Posterior vena cava (tissue), 2 donors: ENCODE measurements at regions of chr13 and their contacts with region 1.

Region 1: DNA sequence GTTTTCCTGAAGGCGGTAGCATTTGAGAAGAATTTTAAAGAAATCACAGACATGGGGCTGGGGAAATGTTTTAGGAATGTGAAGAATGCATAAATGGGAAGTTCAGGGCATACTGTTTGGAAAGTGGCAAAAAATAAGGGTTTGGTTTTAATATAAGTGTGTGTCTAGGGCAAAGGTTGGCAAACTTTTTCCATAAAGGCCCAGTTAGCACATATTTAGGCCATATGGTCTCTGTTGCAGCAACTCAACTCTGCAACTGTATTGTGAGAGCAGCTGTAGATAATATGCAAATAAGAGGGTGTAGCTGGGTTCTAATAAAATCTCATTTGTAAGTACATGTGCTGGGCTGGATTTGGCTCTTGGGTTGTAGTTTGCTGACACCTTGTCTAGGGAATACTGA is 521.9 kb downstream of the DIAPH3 start:
- DNase-seq: no peak

Region 2: DNA sequence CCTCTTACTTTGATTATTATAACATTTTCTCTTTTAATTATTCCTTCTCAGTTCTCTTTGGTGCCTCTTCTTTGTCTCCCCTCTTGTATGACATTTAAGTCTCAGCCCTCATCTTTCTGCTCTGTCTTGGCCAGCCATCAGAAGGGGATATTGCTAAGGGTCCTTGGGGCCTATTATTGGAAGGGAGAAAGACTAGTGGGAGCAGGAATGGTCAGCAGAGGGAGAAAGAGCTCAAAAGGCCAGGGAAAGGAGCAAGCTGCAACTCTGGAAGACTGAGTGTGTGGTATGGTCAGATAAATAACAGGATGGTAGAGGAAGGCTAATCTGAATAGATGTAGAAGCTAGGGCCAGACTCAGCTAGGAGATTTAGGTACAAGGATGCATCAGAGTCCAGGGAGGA is 1092.1 kb after region 1 on chr13:
- intact Hi-C with region 1: loop called in 1 of 2 experiments (anchors 5 kb)
- DNase-seq: no peak

Region 3: GRCh38 chr13:61286148-61286745 is 1644.4 kb after region 1 on chr13:
- intact Hi-C with region 1: loop called in 1 of 2 experiments (anchors 5 kb)
- DNase-seq: no peak